ENCODE measurements at regions of chrX and their contacts with region 1.

Region 1: GRCh38 chrX:54044126-54044876 is at the start of gene PHF8:
- DNase-seq: peak; percentile 94 to 95
- H3K4me3 ChIP-seq: peak within 1 kb of the TSS; percentile 71
- H3K4me3 Mint-ChIP-seq: peak within 1 kb of the TSS; percentile 89
- H3K27ac Mint-ChIP-seq: peak within 1 kb of the TSS; percentile 90
- H3K4me1 ChIP-seq: 0 out of 2 replicates have a peak, but pooled peaks cover 5% of the 10 kb centered on the region
- H3K4me1 Mint-ChIP-seq: peaks cover 6% of the 10 kb centered on the region
- H3K27me3 ChIP-seq: no peaks in the 10 kb centered on the region
- H3K27me3 Mint-ChIP-seq: no peaks in the 10 kb centered on the region
- CTCF ChIP-seq: no peak
- total RNA-seq, gene PHF8: 23.3 and 26.7 TPM in 2 replicates

Region 2: GRCh38 chrX:53683556-53684414 is 360.5 kb before region 1 on chrX:
- CTCF ChIA-PET with region 1: no interaction called
- POLR2A ChIA-PET with region 1: interaction called, 3 read pairs
- intact Hi-C with region 1: loop called (anchors 10 kb)
- DNase-seq: peak; percentile 91 to 96
- H3K4me3 ChIP-seq: peak overlapping the region; percentile 81
- H3K4me3 Mint-ChIP-seq: peak overlapping the region; percentile 94
- H3K27ac Mint-ChIP-seq: peak overlapping the region; percentile 91
- H3K4me1 ChIP-seq: no peaks in the 10 kb centered on the region
- H3K4me1 Mint-ChIP-seq: peaks cover 6% of the 10 kb centered on the region
- H3K27me3 ChIP-seq: no peaks in the 10 kb centered on the region
- H3K27me3 Mint-ChIP-seq: no peaks in the 10 kb centered on the region
- CTCF ChIP-seq: no peak

Region 3: DNA sequence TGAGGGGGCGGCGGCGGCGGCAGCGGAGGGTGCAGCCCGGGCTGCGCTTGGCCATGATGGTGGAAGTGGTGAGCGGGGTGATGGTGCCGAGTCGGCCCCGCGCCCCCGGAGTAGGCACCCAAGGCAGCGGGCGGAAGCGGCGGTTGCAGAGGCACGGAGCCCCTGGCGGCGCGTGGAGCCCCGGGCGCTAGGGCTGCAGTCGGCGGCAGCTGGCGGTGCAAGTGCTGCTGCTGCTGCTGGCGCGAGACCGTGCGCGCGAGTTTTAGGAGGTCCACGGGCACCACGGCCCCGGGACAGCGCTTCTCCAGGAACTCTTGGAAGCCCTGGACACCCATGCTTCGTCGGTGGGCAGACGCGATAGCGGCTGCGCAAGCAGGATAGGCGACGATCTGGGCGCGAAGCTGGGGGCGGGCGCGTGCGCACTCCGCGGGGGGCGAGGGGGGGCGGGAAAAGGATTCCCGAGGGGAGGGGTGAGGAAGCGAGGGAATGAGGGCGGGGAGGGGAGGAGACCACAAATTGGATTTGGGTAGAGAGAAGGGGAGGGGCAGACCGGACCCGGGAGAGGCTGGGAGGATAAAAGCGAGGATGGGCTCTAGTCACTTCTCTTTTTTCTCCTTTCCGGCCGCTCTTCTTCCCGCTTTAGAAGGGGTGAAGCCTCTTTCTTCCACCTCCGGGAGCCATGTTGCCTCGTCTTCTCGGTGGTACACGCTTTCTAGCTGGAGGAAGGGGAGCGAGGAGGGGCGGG is 138.7 kb after region 1 on chrX and contains the start of gene FAM120C:
- CTCF ChIA-PET with region 1: no interaction called
- POLR2A ChIA-PET with region 1: interaction called, 5 read pairs
- intact Hi-C with region 1: loop called (anchors 2 kb)
- DNase-seq: peak; percentile 64 to 71
- H3K4me3 ChIP-seq: peak within 1 kb of the TSS; percentile 80
- H3K4me3 Mint-ChIP-seq: peak within 1 kb of the TSS; percentile 93
- H3K27ac Mint-ChIP-seq: peak within 1 kb of the TSS; percentile 75
- H3K4me1 ChIP-seq: peaks cover 6% of the 10 kb centered on the region; the same call in 1 of the 2 replicates
- H3K4me1 Mint-ChIP-seq: peaks cover 20% of the 10 kb centered on the region
- H3K27me3 ChIP-seq: no peaks in the 10 kb centered on the region
- H3K27me3 Mint-ChIP-seq: no peaks in the 10 kb centered on the region
- CTCF ChIP-seq: no peak
- total RNA-seq, gene FAM120C: 6.6 and 7.0 TPM in 2 replicates

Region 4: GRCh38 chrX:54439967-54440871 is 395.9 kb after region 1 on chrX and contains the start of gene TSR2:
- CTCF ChIA-PET with region 1: no interaction called
- POLR2A ChIA-PET with region 1: interaction called, 3 read pairs
- intact Hi-C with region 1: loop called (anchors 2 kb)
- DNase-seq: peak; percentile 80 to 83
- H3K4me3 ChIP-seq: peak within 1 kb of the TSS; percentile 55
- H3K4me3 Mint-ChIP-seq: peak within 1 kb of the TSS; percentile 95
- H3K27ac Mint-ChIP-seq: peak within 1 kb of the TSS; percentile 90
- H3K4me1 ChIP-seq: no peaks in the 10 kb centered on the region
- H3K4me1 Mint-ChIP-seq: peaks cover 6% of the 10 kb centered on the region
- H3K27me3 ChIP-seq: no peaks in the 10 kb centered on the region
- H3K27me3 Mint-ChIP-seq: no peaks in the 10 kb centered on the region
- CTCF ChIP-seq: no peak
- total RNA-seq, gene TSR2: 42.4 and 45.7 TPM in 2 replicates